PC-3 (cell line): ENCODE measurements at regions of chr15 and their contacts with region 1.

Region 1: DNA sequence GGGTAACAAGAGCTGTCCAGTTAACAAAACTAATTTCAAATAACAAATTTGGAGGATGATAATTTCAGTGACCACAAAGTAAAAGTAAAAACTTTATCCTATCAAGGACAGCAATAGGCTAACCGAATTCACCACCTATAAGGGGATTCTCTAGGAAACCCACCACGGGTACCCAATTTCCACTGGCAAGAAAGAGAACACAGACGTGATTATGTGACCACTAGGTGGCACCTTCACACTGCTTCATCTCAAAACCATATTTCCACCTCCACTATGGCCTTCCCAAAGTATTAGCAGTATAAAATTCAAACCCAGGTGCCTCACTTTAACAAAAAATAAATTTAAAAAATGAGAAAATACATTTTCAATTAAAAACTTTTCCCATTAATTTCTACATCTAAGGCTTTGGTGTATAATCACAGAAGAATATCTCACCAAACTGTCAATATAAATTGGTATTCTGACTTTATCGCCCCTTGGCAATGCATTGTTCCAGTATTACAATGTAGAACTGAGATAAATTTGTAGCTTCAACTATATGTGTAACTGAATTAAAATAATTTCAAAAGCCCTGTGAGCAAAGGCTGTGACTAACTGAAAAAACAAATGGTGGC is 96.5 kb downstream of the FSIP1 start:
- DNase-seq: peak; percentile 70
- ATAC-seq: peak; percentile 80
- H3K4me3 ChIP-seq: no peak overlapping the region
- H3K27ac ChIP-seq: no peak overlapping the region
- H3K4me1 ChIP-seq: no peaks in the 10 kb centered on the region
- H3K27me3 ChIP-seq: no peaks in the 10 kb centered on the region
- CTCF ChIP-seq: peak; percentile 92

Region 2: DNA sequence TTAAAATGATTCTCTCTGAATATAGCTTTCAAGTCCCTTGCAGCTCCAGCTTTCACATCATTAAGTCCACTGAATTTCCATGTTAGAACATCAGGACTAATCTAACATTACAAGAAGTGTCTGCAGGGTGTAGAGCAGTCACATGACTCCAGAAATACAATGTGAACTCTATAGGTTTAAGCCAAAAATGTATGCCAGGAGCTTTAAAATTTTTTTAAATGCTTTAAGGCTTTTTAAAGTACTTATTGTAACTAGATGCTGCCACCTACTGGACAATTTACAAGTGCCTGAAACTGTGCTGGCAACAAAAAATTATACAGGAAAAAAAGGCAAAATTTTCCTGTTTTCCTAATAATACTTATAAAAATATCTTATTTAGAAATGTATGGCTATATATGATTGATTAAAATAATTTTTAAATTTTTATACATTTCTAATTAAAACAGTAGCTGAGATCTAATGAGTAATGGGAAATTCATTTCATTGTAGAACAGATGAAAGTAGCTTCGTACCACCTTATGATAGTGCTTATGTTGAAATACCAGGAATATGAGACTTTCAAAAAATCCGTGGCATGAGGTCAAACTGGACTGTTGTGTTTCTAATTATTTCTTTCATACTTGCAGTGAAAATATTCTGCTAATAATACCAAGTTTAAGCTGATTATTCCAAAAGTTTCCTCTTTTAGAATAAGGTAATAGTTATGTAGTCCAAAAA is 70.9 kb after region 1 on chr15:
- CTCF ChIA-PET with region 1: interaction called, 21 read pairs
- POLR2A ChIA-PET with region 1: no interaction called
- intact Hi-C with region 1: loop called (anchors 1 kb)
- DNase-seq: peak; percentile 79
- ATAC-seq: peak; percentile 46; the same call in 1 of the 2 replicates
- H3K4me3 ChIP-seq: no peak overlapping the region
- H3K27ac ChIP-seq: no peak overlapping the region
- H3K4me1 ChIP-seq: no peaks in the 10 kb centered on the region
- H3K27me3 ChIP-seq: no peaks in the 10 kb centered on the region
- CTCF ChIP-seq: peak; percentile 78